K562 (cell line): ENCODE measurements at regions of chr12 and their contacts with region 1.

Region 1: DNA sequence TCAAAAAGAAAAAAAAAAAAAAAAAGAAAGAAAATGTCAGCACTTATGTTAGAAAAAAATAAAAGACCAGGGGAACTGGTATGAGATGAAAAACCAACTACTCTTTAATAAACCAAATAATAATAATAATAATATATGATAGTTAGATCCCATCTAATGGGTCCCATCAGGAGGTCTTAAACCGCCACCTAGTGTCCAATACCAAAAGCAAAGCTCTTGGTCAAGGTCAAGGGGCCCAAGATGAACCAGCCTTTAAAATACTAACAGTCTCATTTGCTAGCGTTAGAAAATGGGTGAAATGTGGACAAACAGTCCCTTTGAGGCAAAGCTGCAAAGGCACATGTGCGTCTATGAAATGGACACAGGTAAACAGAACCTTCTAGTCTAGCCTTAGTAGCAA is 12.3 kb downstream of the BRAP start:
- DNase-seq: peak; percentile 30 to 54 (median 48)
- ATAC-seq: peak; percentile 85
- H3K4me3 ChIP-seq: no peak overlapping the region
- H3K27ac ChIP-seq: peak overlapping the region; percentile 38; the same call in 1 of the 3 replicates
- H3K4me1 ChIP-seq: no peaks in the 10 kb centered on the region
- H3K27me3 ChIP-seq: no peaks in the 10 kb centered on the region
- CTCF ChIP-seq: peak; percentile 47 to 74 (median 59)
- EP300 ChIP-seq: no peak
- POLR2A ChIP-seq: no peak
- RAD21 ChIP-seq: peak; percentile 59 to 64

Region 2: DNA sequence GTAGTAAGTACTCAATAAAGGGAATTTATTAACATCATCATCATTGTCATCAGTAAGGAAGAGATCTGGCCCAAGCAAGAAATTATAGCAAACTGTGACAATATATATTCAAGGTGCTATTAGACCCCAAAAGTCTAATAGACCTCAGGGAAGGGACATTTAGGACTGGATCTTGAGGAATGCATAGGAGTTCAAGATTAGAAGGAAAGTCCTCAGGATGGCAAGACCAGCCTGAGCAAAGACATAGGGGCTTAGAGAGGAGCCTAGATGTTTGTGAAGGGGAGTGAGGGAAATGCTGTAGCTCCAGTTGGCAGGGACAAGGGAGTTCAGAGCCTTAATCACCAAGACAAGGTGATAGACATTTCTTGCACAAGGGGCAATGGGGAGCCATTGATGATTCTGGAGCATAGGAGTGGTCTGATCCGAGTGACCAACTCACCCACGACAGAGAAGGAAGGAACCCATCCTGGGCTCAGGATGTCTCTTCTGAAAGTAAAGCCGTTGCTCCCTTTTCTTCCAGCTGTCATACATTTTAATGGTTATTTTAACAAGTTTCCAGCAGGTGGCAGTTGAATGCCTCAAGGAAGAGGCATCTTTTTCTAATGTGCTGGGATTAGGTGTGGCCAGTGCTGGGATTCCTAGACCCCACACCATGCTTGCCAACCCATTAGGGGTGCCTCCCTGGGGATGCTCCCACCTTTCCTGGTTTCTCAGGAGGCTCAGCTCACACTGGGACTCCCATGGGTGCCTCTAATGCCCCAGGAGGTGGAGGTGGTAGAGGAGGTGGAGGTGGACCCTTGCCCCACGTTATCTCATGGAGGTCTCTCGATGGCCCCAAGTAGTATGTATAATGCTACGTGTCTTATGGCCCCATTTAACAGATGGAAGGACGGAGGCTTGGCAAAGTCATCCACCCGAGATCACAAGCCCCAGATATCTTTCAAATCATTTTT is 342.4 kb before region 1 on chr12:
- CTCF ChIA-PET with region 1: no interaction called
- POLR2A ChIA-PET with region 1: no interaction called
- in situ Hi-C with region 1: loop called (anchors 10 kb)
- intact Hi-C with region 1: no loop called
- DNase-seq: peak; percentile 40 to 68 (median 50)
- ATAC-seq: peak; percentile 87
- H3K4me3 ChIP-seq: no peak overlapping the region
- H3K27ac ChIP-seq: no peak overlapping the region
- H3K4me1 ChIP-seq: no peaks in the 10 kb centered on the region; a peak in 1 of 5 replicates
- H3K27me3 ChIP-seq: peaks cover 18 to 64% of the 10 kb centered on the region in 2 experiments; a peak in 4 of 5 replicates
- CTCF ChIP-seq: peak; percentile 59 to 75 (median 71)
- EP300 ChIP-seq: no peak
- POLR2A ChIP-seq: no peak
- RAD21 ChIP-seq: peak; percentile 50 to 70

Region 3: DNA sequence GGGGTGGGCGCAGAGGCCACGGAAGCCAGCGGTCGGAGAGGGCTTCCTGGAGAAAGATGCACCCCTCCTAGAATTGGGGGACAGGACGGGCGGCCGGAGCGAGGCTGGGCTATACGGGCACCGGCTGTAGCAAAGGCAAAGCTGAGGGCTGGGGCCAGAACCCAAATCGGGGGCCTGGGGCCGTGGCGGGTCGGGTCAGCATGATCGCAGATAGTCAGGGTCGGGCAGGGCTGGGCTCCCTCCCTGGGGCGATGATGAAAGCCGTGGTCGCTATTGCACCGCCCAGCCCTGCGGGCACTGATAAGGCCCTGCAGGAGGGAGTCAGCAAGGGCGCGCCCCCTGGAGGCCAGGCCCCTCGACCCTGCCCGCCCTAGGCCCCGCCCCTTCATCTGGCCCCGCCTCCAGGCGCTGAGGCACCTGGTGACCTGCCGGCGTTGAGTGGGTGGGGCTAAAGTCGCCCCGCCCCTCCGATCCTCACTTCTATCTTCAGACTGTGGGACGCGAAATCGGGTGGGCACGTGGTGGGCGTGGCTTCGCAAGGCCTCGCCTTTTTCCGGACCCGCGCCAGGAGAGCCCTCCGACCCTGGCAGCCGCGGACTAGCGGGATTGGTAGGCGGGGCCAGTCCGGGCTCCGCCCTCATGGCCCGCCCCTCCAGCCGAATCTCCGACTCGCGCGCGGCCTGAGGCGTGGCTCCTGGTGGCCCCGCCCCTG is 268.2 kb before region 1 on chr12:
- CTCF ChIA-PET with region 1: no interaction called
- POLR2A ChIA-PET with region 1: no interaction called
- in situ Hi-C with region 1: loop called (anchors 5 kb)
- intact Hi-C with region 1: no loop called
- DNase-seq: peak; percentile 97 to 99 (median 98)
- ATAC-seq: peak; percentile 76
- H3K4me3 ChIP-seq: peak overlapping the region; percentile 93
- H3K27ac ChIP-seq: peak overlapping the region; percentile 97
- H3K4me1 ChIP-seq: peaks cover 50 to 76% of the 10 kb centered on the region in 2 experiments
- H3K27me3 ChIP-seq: no peaks in the 10 kb centered on the region; a peak in 1 of 5 replicates
- CTCF ChIP-seq: peak; percentile 75 to 76 (median 75)
- EP300 ChIP-seq: peak; percentile 94
- POLR2A ChIP-seq: peak; percentile 88
- RAD21 ChIP-seq: peak; percentile 37 to 47; a peak in 3 of 4 replicates

Region 4: DNA sequence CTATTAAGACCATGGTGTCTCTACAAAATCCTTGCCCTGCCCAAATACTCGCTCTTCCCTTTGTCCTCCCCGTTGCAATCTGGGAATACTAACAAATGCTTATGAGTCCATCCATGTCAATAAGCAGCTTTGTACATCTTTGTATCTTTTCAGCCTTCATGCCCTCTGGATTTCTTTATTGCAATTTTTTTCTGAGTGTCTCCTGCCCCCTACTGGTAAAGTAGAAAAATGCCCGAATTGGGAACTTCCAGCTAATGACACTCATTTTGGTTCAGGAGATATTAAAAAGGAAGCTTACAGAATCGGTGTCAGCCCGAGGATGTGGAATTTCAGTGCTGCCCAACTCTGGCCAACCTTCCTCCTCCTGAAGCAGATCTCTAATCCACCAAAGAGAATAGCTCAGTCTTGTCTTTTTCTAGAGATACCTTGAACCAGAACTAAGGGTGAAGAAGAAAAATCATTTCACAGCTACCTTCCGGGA is 221.8 kb before region 1 on chr12:
- CTCF ChIA-PET with region 1: interaction called, 6 read pairs
- POLR2A ChIA-PET with region 1: no interaction called
- in situ Hi-C with region 1: no loop called
- intact Hi-C with region 1: loop called (anchors 5 kb)
- DNase-seq: peak in 3 of 4 experiments; percentile 36 to 63 (median 46)
- ATAC-seq: peak; percentile 32
- H3K4me3 ChIP-seq: no peak overlapping the region
- H3K27ac ChIP-seq: no peak overlapping the region
- H3K4me1 ChIP-seq: peaks cover 0 to 10% of the 10 kb centered on the region in 2 experiments; a peak in 2 of 5 replicates
- H3K27me3 ChIP-seq: no peaks in the 10 kb centered on the region
- CTCF ChIP-seq: peak; percentile 70 to 88 (median 80); a peak in 5 of 6 replicates
- EP300 ChIP-seq: no peak
- POLR2A ChIP-seq: peak; percentile 12
- RAD21 ChIP-seq: peak; percentile 77 to 80

Region 5: GRCh38 chr12:111529424-111530368 is 143.8 kb before region 1 on chr12:
- CTCF ChIA-PET with region 1: interaction called, 4 read pairs
- POLR2A ChIA-PET with region 1: no interaction called
- in situ Hi-C with region 1: no loop called
- intact Hi-C with region 1: loop called (anchors 10 kb)
- DNase-seq: peak; percentile 75 to 80 (median 76)
- ATAC-seq: peak; percentile 92
- H3K4me3 ChIP-seq: no peak overlapping the region
- H3K27ac ChIP-seq: no peak overlapping the region
- H3K4me1 ChIP-seq: no peaks in the 10 kb centered on the region
- H3K27me3 ChIP-seq: no peaks in the 10 kb centered on the region
- CTCF ChIP-seq: peak; percentile 67 to 76 (median 68)
- EP300 ChIP-seq: no peak
- POLR2A ChIP-seq: no peak
- RAD21 ChIP-seq: peak; percentile 37 to 68; a peak in 3 of 4 replicates